ENCODE measurements at regions of chr2 and their contacts with region 1.

Region 1: DNA sequence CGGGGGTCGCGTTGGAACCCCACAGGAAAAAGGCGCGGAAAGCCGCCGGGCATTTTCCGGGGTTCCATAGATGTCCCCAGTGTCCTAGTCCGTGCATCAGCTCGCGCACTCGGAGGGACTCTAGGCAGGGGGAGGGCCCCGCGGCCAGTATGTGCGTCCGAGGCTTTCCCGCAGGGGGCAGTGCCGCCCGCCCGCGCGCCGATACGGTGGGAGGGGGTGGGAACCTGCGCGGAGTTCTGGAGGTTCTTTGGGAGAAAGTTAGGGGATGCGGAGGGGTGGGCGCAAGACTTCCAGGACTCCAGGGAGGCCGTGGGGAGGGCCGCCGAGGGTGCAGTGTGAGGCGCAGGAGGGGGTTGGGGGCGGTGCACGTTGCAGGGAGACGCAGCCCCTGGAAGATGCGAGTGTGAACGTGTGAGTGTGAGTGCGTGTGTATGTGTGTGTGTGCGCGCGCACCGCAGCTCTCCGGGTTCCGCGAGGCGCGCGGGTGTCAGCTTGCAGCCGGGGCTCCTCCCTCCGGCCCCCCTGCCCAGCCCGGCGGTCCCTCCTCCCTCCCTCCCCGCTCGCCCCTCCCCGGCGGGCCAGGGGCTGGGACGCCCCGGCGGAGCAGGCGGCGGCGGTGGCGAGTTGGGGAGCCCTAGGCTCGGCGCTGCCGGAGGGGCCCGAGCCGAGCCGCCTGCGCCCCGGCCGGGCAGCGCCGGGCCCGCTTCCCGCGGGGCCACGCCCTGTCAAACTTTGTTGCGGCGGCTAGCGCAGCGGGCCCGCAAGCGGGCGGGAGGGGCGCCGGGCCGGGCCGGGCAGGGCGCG is at the start of gene TCF7L1:
- DNase-seq: peak; percentile 93
- H3K4me3 ChIP-seq: peak within 1 kb of the TSS; percentile 66 to 90
- H3K27ac ChIP-seq: no peak within 1 kb of the TSS; a peak in 1 of 4 replicates
- H3K4me1 ChIP-seq: peaks cover 0 to 18% of the 10 kb centered on the region in 2 experiments; a peak in 2 of 4 replicates
- H3K27me3 ChIP-seq: no peaks in the 10 kb centered on the region
- CTCF ChIP-seq: peak; percentile 88
- EP300 ChIP-seq: no peak
- RAD21 ChIP-seq: peak; percentile 75
- polyA plus RNA-seq, gene TCF7L1: 1.6 and 3.7 TPM in 2 replicates

Region 2: DNA sequence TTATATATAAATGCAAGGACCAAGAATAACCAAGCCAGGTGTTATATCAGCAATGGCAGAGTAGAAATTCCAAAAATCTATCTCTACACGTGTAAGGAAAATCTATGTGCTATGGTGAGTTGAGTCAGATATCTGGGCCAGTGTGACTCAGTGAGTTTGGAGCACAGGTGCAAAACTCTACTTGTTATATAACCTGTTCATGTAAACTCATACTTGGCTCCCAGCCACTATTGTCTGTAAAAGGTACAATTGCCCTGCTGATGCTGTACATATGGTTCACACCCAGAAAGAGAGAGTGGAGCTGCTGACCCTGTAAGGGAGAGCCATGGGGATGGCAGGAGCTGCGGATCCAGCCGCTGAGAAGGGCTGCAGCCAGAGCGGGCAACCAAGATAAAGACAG is 364.2 kb before region 1 on chr2:
- CTCF ChIA-PET with region 1: no interaction called
- POLR2A ChIA-PET with region 1: no interaction called
- DNase-seq: no peak
- H3K4me3 ChIP-seq: no peak overlapping the region
- H3K27ac ChIP-seq: no peak overlapping the region
- H3K4me1 ChIP-seq: no peaks in the 10 kb centered on the region
- H3K27me3 ChIP-seq: no peaks in the 10 kb centered on the region
- CTCF ChIP-seq: no peak
- EP300 ChIP-seq: no peak
- RAD21 ChIP-seq: no peak

Region 3: DNA sequence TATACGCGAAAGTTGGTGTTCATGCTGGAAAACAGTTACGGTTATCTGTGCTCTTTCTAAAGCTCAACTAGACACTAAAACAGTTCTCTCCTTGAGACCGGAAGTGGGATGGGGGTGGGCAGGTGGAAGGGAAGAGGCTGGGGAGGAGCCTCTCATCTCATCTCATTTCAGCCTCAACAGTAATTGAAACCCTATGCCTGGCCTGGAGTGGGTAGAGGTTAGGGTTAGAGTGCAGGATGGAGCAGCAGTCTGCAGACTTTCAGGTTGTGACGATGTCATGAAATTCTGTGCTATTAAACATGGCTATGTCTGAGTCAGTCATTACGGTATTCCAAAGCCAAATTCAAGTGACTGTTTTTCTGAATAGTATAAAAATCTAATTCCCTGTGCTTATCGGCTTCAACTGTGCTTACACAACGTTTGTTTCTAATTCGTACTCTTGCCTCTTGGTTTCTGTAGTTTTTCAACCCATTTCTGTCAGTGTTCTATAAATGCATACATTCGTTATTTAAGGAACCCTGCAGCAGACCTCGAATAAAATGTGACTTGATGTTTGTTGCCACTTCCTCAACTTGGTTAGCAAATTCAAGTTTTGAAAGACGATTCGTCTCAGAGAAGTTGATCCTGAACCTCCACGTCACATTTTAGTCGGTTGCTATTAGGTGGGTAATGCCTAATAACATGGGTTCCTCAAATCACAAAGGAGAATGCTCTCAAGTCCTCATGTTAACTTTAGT is 75.6 kb before region 1 on chr2:
- CTCF ChIA-PET with region 1: no interaction called
- POLR2A ChIA-PET with region 1: no interaction called
- DNase-seq: no peak
- H3K4me3 ChIP-seq: no peak overlapping the region
- H3K27ac ChIP-seq: no peak overlapping the region
- H3K4me1 ChIP-seq: peaks cover 0 to 8% of the 10 kb centered on the region in 2 experiments; a peak in 2 of 4 replicates
- H3K27me3 ChIP-seq: no peaks in the 10 kb centered on the region
- CTCF ChIP-seq: no peak
- EP300 ChIP-seq: no peak
- RAD21 ChIP-seq: no peak

Region 4: GRCh38 chr2:85111819-85112281 is 21.2 kb before region 1 on chr2:
- CTCF ChIA-PET with region 1: interaction called, 14 read pairs
- POLR2A ChIA-PET with region 1: no interaction called
- DNase-seq: no peak
- H3K4me3 ChIP-seq: no peak overlapping the region
- H3K27ac ChIP-seq: no peak overlapping the region
- H3K4me1 ChIP-seq: no peaks in the 10 kb centered on the region
- H3K27me3 ChIP-seq: no peaks in the 10 kb centered on the region; the same call in 1 of the 2 replicates
- CTCF ChIP-seq: no peak
- EP300 ChIP-seq: no peak
- RAD21 ChIP-seq: no peak

Region 5: DNA sequence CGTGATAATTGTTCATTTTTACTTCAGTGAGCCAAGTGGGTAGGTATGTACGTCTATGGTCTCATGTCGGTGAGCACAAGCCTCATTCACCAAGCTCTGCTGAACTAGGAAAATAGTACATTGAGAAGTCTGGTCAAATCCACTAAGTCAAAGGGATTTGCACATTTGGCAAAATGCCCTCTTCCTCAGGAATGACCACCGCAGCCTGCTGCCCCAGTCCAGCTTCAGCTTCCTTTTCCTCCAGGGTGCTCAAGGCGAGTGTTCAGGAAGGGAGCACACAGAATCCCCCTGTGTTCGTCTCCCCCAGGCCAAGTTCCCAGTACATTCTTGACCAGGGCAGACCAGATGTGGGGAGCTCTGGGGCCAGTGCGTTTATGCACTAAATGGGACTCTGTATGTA is 23.1 kb after region 1 on chr2:
- CTCF ChIA-PET with region 1: interaction called, 14 read pairs
- POLR2A ChIA-PET with region 1: no interaction called
- DNase-seq: no peak
- H3K4me3 ChIP-seq: no peak overlapping the region
- H3K27ac ChIP-seq: peak overlapping the region in 1 of 2 experiments; percentile 16; a peak in 1 of 4 replicates
- H3K4me1 ChIP-seq: peaks cover 9 to 41% of the 10 kb centered on the region in 2 experiments; a peak in 2 of 4 replicates
- H3K27me3 ChIP-seq: no peaks in the 10 kb centered on the region
- CTCF ChIP-seq: no peak
- EP300 ChIP-seq: no peak
- RAD21 ChIP-seq: no peak

Region 6: GRCh38 chr2:85173909-85174308 is 40.9 kb after region 1 on chr2:
- CTCF ChIA-PET with region 1: no interaction called
- POLR2A ChIA-PET with region 1: no interaction called
- DNase-seq: no peak
- H3K4me3 ChIP-seq: no peak overlapping the region
- H3K27ac ChIP-seq: no peak overlapping the region
- H3K4me1 ChIP-seq: no peaks in the 10 kb centered on the region; a peak in 1 of 4 replicates
- H3K27me3 ChIP-seq: no peaks in the 10 kb centered on the region
- CTCF ChIP-seq: no peak
- EP300 ChIP-seq: no peak
- RAD21 ChIP-seq: no peak

Region 7: GRCh38 chr2:85266146-85267041 is 133.4 kb after region 1 on chr2:
- CTCF ChIA-PET with region 1: interaction called, 13 read pairs
- POLR2A ChIA-PET with region 1: no interaction called
- DNase-seq: peak; percentile 72
- H3K4me3 ChIP-seq: peak overlapping the region in 1 of 2 experiments; percentile 39; a peak in 1 of 4 replicates
- H3K27ac ChIP-seq: no peak overlapping the region
- H3K4me1 ChIP-seq: peaks cover 9 to 22% of the 10 kb centered on the region in 2 experiments; a peak in 2 of 4 replicates
- H3K27me3 ChIP-seq: no peaks in the 10 kb centered on the region
- CTCF ChIP-seq: peak; percentile 95
- EP300 ChIP-seq: no peak
- RAD21 ChIP-seq: peak; percentile 70

Region 8: GRCh38 chr2:85288244-85288725 is 155.2 kb after region 1 on chr2:
- CTCF ChIA-PET with region 1: interaction called, 110 read pairs
- POLR2A ChIA-PET with region 1: interaction called, 3 read pairs
- DNase-seq: no peak
- H3K4me3 ChIP-seq: no peak overlapping the region
- H3K27ac ChIP-seq: no peak overlapping the region
- H3K4me1 ChIP-seq: peaks cover 3 to 9% of the 10 kb centered on the region in 2 experiments; a peak in 2 of 4 replicates
- H3K27me3 ChIP-seq: no peaks in the 10 kb centered on the region
- CTCF ChIP-seq: no peak
- EP300 ChIP-seq: no peak
- RAD21 ChIP-seq: no peak

Region 9: DNA sequence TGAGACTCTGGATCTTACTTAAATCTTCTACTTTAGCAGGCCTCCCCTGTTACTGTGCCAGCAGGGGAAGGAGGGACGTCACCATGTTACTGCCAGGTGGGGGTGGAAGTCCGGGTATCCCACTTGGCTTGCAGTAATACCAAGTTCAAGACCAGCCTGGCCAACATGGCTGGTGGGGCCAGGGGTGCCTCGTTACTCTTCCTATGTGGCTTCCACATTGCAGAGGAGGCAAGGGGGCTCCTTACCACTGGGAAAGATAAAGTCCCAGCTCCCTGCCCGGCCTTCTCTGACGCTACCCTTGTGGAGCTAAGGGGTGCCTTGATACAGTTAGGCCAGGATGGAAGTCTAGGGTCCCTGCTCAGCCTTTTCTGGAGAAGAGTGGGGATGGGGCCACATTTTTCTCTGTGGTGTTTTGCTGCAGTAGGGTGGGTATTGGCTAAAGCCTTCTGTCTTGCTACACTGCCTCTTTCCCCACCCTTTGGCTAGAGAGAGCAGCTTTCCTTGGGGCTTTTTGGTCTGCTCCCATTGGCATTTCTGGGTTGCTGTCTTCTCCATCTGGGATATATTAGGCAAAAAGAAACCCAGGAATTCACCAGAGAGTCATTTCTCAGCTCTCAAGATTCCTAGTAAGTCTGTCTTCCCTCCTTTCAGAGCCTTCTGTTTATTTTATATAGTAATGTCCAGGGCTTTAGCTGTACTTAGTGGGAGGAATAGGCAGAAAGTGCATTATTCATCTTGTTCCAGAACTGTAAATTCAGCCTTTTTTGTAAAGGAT is 243.4 kb after region 1 on chr2:
- CTCF ChIA-PET with region 1: no interaction called
- POLR2A ChIA-PET with region 1: no interaction called
- DNase-seq: no peak
- H3K4me3 ChIP-seq: no peak overlapping the region
- H3K27ac ChIP-seq: no peak overlapping the region
- H3K4me1 ChIP-seq: no peaks in the 10 kb centered on the region
- H3K27me3 ChIP-seq: no peaks in the 10 kb centered on the region
- CTCF ChIP-seq: no peak
- EP300 ChIP-seq: no peak
- RAD21 ChIP-seq: no peak